Activated CD4-positive, alpha-beta T cell treated with anti-CD3 and anti-CD28 coated beads, Interleukin-2, amount 10 ng/mL, durations not matched to agents 7 days and 5 days (primary cell): ENCODE measurements at regions of chr1 and their contacts with region 1.

Region 1: GRCh38 chr1:197868751-197869489 is 33.5 kb upstream of the C1orf53 start:
- DNase-seq: peak; percentile 56
- H3K4me3 Mint-ChIP-seq: no peak overlapping the region
- H3K27ac Mint-ChIP-seq: no peak overlapping the region
- H3K4me1 Mint-ChIP-seq: peaks cover 2% of the 10 kb centered on the region
- H3K27me3 Mint-ChIP-seq: peaks cover 14% of the 10 kb centered on the region

Region 2: GRCh38 chr1:197619008-197619640 is 249.8 kb before region 1 on chr1:
- CTCF ChIA-PET with region 1: interaction called, 10 read pairs
- POLR2A ChIA-PET with region 1: no interaction called
- DNase-seq: no peak
- H3K4me3 Mint-ChIP-seq: no peak overlapping the region
- H3K27ac Mint-ChIP-seq: no peak overlapping the region
- H3K4me1 Mint-ChIP-seq: no peaks in the 10 kb centered on the region
- H3K27me3 Mint-ChIP-seq: no peaks in the 10 kb centered on the region

Region 3: GRCh38 chr1:197663178-197663953 is 205.6 kb before region 1 on chr1:
- CTCF ChIA-PET with region 1: no interaction called
- POLR2A ChIA-PET with region 1: no interaction called
- DNase-seq: no peak
- H3K4me3 Mint-ChIP-seq: no peak overlapping the region
- H3K27ac Mint-ChIP-seq: no peak overlapping the region
- H3K4me1 Mint-ChIP-seq: peaks cover 6% of the 10 kb centered on the region
- H3K27me3 Mint-ChIP-seq: no peaks in the 10 kb centered on the region